HepG2 (cell line): ENCODE measurements at regions of chr1 and their contacts with region 1.

Region 1: DNA sequence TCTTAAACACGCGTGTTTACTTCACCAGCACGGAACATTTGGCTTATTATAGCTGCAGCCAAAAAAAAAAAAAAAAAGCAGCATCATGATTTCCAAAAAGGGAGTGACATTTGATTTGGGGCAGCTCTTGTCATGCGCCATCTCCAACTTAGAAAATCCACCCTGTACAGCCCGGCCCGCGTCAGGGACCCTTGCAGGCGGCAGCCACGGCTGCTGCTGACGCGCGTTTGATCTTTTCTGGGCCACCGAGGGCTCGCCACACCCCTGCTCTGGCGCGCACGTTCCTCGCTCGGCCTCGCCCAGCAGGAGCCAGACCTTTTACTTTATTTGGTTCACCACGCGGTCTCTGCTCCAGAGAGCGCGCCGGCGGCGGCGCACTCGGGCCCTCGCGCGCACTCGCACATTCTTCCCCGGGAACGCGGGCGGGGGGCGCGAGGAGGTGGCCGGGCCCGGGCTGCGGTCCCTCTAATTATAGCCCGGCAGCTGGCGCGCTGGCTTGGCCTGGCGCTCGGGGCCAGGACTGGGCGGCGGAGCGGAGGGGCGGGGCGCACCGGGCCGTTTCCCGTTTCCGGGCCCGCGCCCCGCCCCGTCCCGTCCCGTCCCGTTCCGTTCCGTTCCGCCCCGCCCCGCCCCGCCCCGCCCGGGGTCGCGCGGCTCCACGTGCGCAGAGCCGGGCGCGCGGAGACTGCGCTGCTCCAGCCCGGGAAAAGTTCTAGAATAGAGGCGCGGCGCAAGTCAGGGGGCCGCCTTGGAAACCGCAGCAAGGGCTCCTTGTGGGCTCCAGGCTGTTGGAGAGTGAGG is 10.2 kb downstream of the IRF2BP2 start:
- DNase-seq: peak; percentile 85
- ATAC-seq: peak; percentile 85
- H3K4me3 ChIP-seq: peak overlapping the region; percentile 13 to 51 (median 44); a peak in 4 of 6 replicates
- H3K27ac ChIP-seq: peak overlapping the region; percentile 100
- H3K4me1 ChIP-seq: peaks cover 41% of the 10 kb centered on the region
- H3K27me3 ChIP-seq: no peaks in the 10 kb centered on the region; a peak in 1 of 5 replicates
- CTCF ChIP-seq: 0 out of 2 replicates have a peak, but pooled peaks have one; percentile 13
- EP300 ChIP-seq: no peak; a peak in 1 of 4 replicates
- POLR2A ChIP-seq: peak; percentile 26 to 63
- RAD21 ChIP-seq: peak; percentile 81

Region 2: GRCh38 chr1:234544087-234544579 is 55.7 kb before region 1 on chr1:
- CTCF ChIA-PET with region 1: no interaction called
- POLR2A ChIA-PET with region 1: interaction called, 26 read pairs
- in situ Hi-C with region 1: no loop called
- intact Hi-C with region 1: loop called (anchors 2 kb)
- DNase-seq: peak; percentile 78
- ATAC-seq: peak; percentile 24
- H3K4me3 ChIP-seq: peak overlapping the region in 1 of 3 experiments; percentile 67; a peak in 1 of 6 replicates
- H3K27ac ChIP-seq: peak overlapping the region; percentile 18
- H3K4me1 ChIP-seq: peaks cover 58% of the 10 kb centered on the region
- H3K27me3 ChIP-seq: peaks cover 2 to 6% of the 10 kb centered on the region in 2 experiments; a peak in 3 of 5 replicates
- CTCF ChIP-seq: no peak
- EP300 ChIP-seq: no peak
- POLR2A ChIP-seq: no peak
- RAD21 ChIP-seq: no peak

Region 3: DNA sequence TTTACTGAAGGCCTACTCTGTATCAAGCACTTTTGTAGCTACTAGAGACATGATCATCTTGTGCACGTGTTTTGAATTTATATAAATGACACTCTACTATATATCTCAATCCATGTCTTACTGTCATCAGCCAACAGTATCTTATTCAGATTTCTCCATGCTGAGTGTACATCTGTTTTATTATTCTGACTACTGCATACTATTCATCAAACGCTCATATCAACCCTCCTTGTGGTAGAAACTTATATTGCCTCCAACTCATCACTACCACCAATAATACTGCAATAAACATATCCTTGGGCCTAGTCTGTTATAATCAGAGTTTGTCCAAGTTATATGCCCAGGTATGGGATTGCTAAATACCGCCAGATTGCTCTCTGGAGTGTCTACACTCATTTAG is 91.8 kb after region 1 on chr1:
- CTCF ChIA-PET with region 1: no interaction called
- POLR2A ChIA-PET with region 1: no interaction called
- in situ Hi-C with region 1: no loop called
- intact Hi-C with region 1: no loop called
- DNase-seq: no peak
- ATAC-seq: no peak
- H3K4me3 ChIP-seq: no peak overlapping the region
- H3K27ac ChIP-seq: no peak overlapping the region
- H3K4me1 ChIP-seq: 0 out of 2 replicates have a peak, but pooled peaks cover 2% of the 10 kb centered on the region
- H3K27me3 ChIP-seq: no peaks in the 10 kb centered on the region
- CTCF ChIP-seq: no peak
- EP300 ChIP-seq: no peak
- POLR2A ChIP-seq: no peak
- RAD21 ChIP-seq: no peak

Region 4: GRCh38 chr1:234823191-234824176 is 223.7 kb after region 1 on chr1:
- CTCF ChIA-PET with region 1: no interaction called
- POLR2A ChIA-PET with region 1: no interaction called
- in situ Hi-C with region 1: no loop called
- intact Hi-C with region 1: loop called (anchors 10 kb)
- DNase-seq: no peak
- ATAC-seq: no peak
- H3K4me3 ChIP-seq: no peak overlapping the region
- H3K27ac ChIP-seq: no peak overlapping the region
- H3K4me1 ChIP-seq: peaks cover 17% of the 10 kb centered on the region
- H3K27me3 ChIP-seq: no peaks in the 10 kb centered on the region
- CTCF ChIP-seq: no peak
- EP300 ChIP-seq: no peak
- POLR2A ChIP-seq: no peak
- RAD21 ChIP-seq: no peak

Region 5: DNA sequence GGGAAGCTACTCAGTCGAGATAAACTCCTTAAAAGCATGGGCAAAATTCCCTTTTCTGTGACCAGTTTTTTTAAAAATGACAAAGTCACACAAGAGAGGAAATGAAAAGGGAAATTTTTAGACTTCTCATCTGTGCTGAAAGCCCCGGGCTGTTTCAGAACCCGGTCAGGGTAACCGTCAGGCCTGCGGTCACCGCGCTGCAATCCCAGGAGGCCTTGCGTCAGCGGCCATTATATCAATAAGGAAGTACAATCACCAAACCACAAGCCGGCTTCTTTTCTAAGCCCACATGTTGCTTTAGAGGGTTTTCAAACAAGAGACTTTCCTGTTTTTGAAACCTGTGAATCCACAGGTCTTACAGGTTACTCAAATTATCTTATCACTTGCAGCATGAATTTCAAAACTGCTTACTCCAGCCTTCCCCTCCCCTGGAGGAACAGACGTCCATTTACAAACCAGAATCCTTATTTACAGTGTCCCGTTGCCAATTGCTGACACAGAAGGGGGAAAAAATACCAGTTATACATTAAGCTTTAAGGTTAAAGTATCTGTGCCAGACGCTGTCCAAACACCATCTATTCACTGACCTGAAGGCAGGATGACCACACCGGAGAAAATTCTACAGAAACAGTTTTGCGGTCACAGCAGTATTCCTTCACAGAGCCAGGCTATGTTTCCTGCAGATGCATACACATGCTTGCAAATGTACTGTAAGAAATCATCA is 363.5 kb after region 1 on chr1:
- CTCF ChIA-PET with region 1: no interaction called
- POLR2A ChIA-PET with region 1: interaction called, 19 read pairs
- in situ Hi-C with region 1: no loop called
- intact Hi-C with region 1: no loop called
- DNase-seq: peak; percentile 99
- ATAC-seq: peak; percentile 70
- H3K4me3 ChIP-seq: peak overlapping the region in 2 of 3 experiments; percentile 33 to 55; a peak in 2 of 6 replicates
- H3K27ac ChIP-seq: peak overlapping the region; percentile 100
- H3K4me1 ChIP-seq: peaks cover 78% of the 10 kb centered on the region
- H3K27me3 ChIP-seq: no peaks in the 10 kb centered on the region
- CTCF ChIP-seq: no peak
- EP300 ChIP-seq: peak in 1 of 2 experiments; percentile 98; a peak in 2 of 4 replicates
- POLR2A ChIP-seq: peak; percentile 70 to 80
- RAD21 ChIP-seq: peak; percentile 26; the same call in 1 of the 2 replicates

Region 6: GRCh38 chr1:235067263-235068172 is 467.7 kb after region 1 on chr1:
- CTCF ChIA-PET with region 1: no interaction called
- POLR2A ChIA-PET with region 1: interaction called, 31 read pairs
- in situ Hi-C with region 1: no loop called
- intact Hi-C with region 1: no loop called
- DNase-seq: peak; percentile 58
- ATAC-seq: peak; percentile 4; the same call in 2 of the 3 replicates
- H3K4me3 ChIP-seq: peak overlapping the region; percentile 41 to 76 (median 60); a peak in 5 of 6 replicates
- H3K27ac ChIP-seq: peak overlapping the region; percentile 86
- H3K4me1 ChIP-seq: peaks cover 97% of the 10 kb centered on the region
- H3K27me3 ChIP-seq: no peaks in the 10 kb centered on the region
- CTCF ChIP-seq: no peak
- EP300 ChIP-seq: no peak
- POLR2A ChIP-seq: peak in 1 of 2 experiments; percentile 21; a peak in 2 of 4 replicates
- RAD21 ChIP-seq: no peak

Region 7: GRCh38 chr1:235093696-235094592 is 494.1 kb after region 1 on chr1:
- CTCF ChIA-PET with region 1: no interaction called
- POLR2A ChIA-PET with region 1: no interaction called
- in situ Hi-C with region 1: loop called (anchors 5 kb)
- intact Hi-C with region 1: no loop called
- DNase-seq: peak; percentile 51
- ATAC-seq: peak; percentile 75
- H3K4me3 ChIP-seq: peak overlapping the region in 1 of 3 experiments; percentile 41; a peak in 1 of 6 replicates
- H3K27ac ChIP-seq: no peak overlapping the region
- H3K4me1 ChIP-seq: peaks cover 60% of the 10 kb centered on the region
- H3K27me3 ChIP-seq: no peaks in the 10 kb centered on the region
- CTCF ChIP-seq: peak; percentile 88
- EP300 ChIP-seq: no peak
- POLR2A ChIP-seq: no peak
- RAD21 ChIP-seq: peak; percentile 64

Region 8: DNA sequence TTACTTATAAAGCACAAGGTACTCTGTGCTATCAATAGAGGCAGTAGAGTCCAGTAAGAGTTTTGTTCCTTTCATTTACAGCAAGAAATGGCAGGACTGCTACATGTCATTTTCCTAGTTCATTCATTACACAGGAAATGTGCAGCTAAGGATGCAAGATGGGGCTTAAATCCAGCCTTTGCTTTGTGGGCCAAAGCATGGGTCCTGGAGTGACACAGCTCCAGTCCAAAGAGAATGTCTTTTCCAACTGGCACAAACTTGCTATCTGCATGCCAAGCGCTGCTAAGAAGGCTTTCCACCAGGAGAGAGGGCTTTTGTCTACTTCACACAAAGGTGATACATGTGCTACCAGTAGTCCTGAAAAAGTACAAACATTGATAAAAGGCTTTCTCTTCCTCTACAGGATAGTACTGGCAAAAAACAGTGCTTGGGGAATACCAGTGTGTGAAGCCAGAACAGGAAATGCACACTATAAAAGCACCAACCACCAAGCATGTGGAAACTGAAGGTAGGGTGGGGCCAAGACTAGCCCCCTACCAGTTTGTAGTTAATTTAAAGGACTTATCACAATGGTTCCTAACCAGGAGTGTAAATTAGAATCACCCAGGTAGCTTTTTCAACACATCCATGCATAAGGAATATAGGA is 659.4 kb after region 1 on chr1:
- CTCF ChIA-PET with region 1: no interaction called
- POLR2A ChIA-PET with region 1: no interaction called
- in situ Hi-C with region 1: no loop called
- intact Hi-C with region 1: no loop called
- DNase-seq: no peak
- ATAC-seq: no peak
- H3K4me3 ChIP-seq: no peak overlapping the region
- H3K27ac ChIP-seq: no peak overlapping the region
- H3K4me1 ChIP-seq: peaks cover 10% of the 10 kb centered on the region; the same call in 1 of the 2 replicates
- H3K27me3 ChIP-seq: no peaks in the 10 kb centered on the region
- CTCF ChIP-seq: no peak
- EP300 ChIP-seq: no peak
- POLR2A ChIP-seq: no peak
- RAD21 ChIP-seq: no peak